Colonic mucosa (tissue), 4 donors: ENCODE measurements at regions of chr21 and their contacts with region 1.

Region 1: GRCh38 chr21:39263372-39263771 is 50.1 kb downstream of the BRWD1 start:
- DNase-seq: no peak
- H3K4me3 ChIP-seq: no peak overlapping the region
- H3K27ac ChIP-seq: no peak overlapping the region
- H3K4me1 ChIP-seq: no peaks in the 10 kb centered on the region
- H3K27me3 ChIP-seq: no peaks in the 10 kb centered on the region
- CTCF ChIP-seq: no peak

Region 2: GRCh38 chr21:39189857-39190604 is 73.3 kb before region 1 on chr21:
- intact Hi-C with region 1: loop called (anchors 10 kb)
- DNase-seq: no peak
- H3K4me3 ChIP-seq: no peak overlapping the region
- H3K27ac ChIP-seq: no peak overlapping the region
- H3K4me1 ChIP-seq: no peaks in the 10 kb centered on the region
- H3K27me3 ChIP-seq: no peaks in the 10 kb centered on the region
- CTCF ChIP-seq: no peak